ENCODE measurements at regions of chr22 and their contacts with region 1.

Region 1: GRCh38 chr22:35376728-35377472 is 4.0 kb upstream of the HMOX1 start:
- DNase-seq: peak; percentile 44
- ATAC-seq: peak; percentile 78
- H3K4me3 Mint-ChIP-seq: peak overlapping the region; percentile 59
- H3K27ac Mint-ChIP-seq: peak overlapping the region; percentile 86
- H3K4me1 Mint-ChIP-seq: peaks cover 49% of the 10 kb centered on the region
- H3K27me3 Mint-ChIP-seq: no peaks in the 10 kb centered on the region
- CTCF ChIP-seq: no peak

Region 2: GRCh38 chr22:35357883-35358621 is 18.8 kb before region 1 on chr22:
- CTCF ChIA-PET with region 1: interaction called, 4 read pairs
- POLR2A ChIA-PET with region 1: interaction called, 39 read pairs
- intact Hi-C with region 1: no loop called
- DNase-seq: no peak
- ATAC-seq: no peak
- H3K4me3 Mint-ChIP-seq: no peak overlapping the region
- H3K27ac Mint-ChIP-seq: peak overlapping the region; percentile 27
- H3K4me1 Mint-ChIP-seq: peaks cover 59% of the 10 kb centered on the region
- H3K27me3 Mint-ChIP-seq: no peaks in the 10 kb centered on the region
- CTCF ChIP-seq: no peak

Region 3: DNA sequence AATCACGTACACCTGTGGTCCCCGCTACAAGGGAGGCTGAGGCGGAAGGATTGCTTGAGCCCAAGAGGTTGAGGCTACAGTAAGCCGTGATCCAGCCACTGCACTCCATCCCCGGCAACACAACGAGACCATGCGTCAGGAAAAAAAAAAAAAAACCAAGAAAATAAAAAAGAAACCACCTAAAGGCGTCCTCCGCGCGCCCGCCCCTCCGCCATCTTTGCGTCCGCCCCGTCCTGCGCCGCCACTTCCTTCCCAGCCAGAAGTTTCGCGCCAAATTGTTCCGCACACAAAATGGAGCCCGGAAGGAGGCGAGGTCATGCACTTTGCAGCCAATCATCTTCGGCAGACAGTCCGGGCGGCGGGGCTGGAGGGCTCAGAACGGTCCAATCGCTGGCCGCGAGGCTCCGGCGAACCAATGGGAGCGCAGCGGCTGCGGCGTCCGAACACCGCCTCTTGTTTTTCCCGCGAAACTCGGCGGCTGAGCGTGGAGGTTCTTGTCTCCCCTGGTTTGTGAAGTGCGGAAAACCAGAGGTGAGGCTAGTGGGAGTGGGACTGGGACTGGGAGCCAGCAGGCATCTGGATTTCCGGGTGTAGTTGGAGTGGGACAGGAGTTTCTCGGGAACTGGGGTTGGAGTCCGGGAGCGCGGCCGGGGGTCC is 22.9 kb after region 1 on chr22 and contains the start of gene MCM5:
- CTCF ChIA-PET with region 1: interaction called, 3 read pairs
- POLR2A ChIA-PET with region 1: interaction called, 14 read pairs
- intact Hi-C with region 1: loop called (anchors 1 kb)
- DNase-seq: peak; percentile 87
- ATAC-seq: peak; percentile 96
- H3K4me3 Mint-ChIP-seq: peak within 1 kb of the TSS; percentile 99
- H3K27ac Mint-ChIP-seq: peak within 1 kb of the TSS; percentile 99
- H3K4me1 Mint-ChIP-seq: peaks cover 57% of the 10 kb centered on the region
- H3K27me3 Mint-ChIP-seq: no peaks in the 10 kb centered on the region
- CTCF ChIP-seq: no peak
- total RNA-seq, gene MCM5: 176 and 178 TPM in 2 replicates

Measured in activated B cell treated with CpG ODN at 0.5 μM for 24 hours (primary cell).